ENCODE measurements at regions of chr20 and their contacts with region 1.

Region 1: GRCh38 chr20:60123096-60123495 is 164.9 kb downstream of the CDH26 start:
- DNase-seq: no peak
- H3K4me3 ChIP-seq: no peak overlapping the region
- H3K27ac ChIP-seq: no peak overlapping the region
- H3K4me1 ChIP-seq: peaks cover 3 to 27% (median 11%) of the 10 kb centered on the region in 4 experiments
- H3K27me3 ChIP-seq: no peaks in the 10 kb centered on the region

Region 2: GRCh38 chr20:59770270-59770669 is 352.8 kb before region 1 on chr20:
- CTCF ChIA-PET with region 1: no interaction called
- POLR2A ChIA-PET with region 1: no interaction called
- DNase-seq: no peak
- H3K4me3 ChIP-seq: no peak overlapping the region
- H3K27ac ChIP-seq: no peak overlapping the region
- H3K4me1 ChIP-seq: no peaks in the 10 kb centered on the region
- H3K27me3 ChIP-seq: peaks cover 0 to 11% (median 8%) of the 10 kb centered on the region in 5 experiments

Region 3: GRCh38 chr20:60011512-60012507 is 111.3 kb before region 1 on chr20:
- CTCF ChIA-PET with region 1: no interaction called
- POLR2A ChIA-PET with region 1: no interaction called
- DNase-seq: peak in 2 of 3 donors; percentile 11 to 21
- H3K4me3 ChIP-seq: peak overlapping the region in 1 of 7 experiments; percentile 7
- H3K27ac ChIP-seq: no peak overlapping the region
- H3K4me1 ChIP-seq: peaks cover 0 to 29% (median 7%) of the 10 kb centered on the region in 4 experiments
- H3K27me3 ChIP-seq: no peaks in the 10 kb centered on the region

Region 4: GRCh38 chr20:60137629-60138245 is 14.6 kb after region 1 on chr20:
- CTCF ChIA-PET with region 1: interaction called, 11 read pairs
- POLR2A ChIA-PET with region 1: no interaction called
- DNase-seq: peak; percentile 31 to 70 (median 69)
- H3K4me3 ChIP-seq: peak overlapping the region in 2 of 7 experiments; percentile 24 to 37
- H3K27ac ChIP-seq: no peak overlapping the region
- H3K4me1 ChIP-seq: peaks cover 21 to 44% (median 38%) of the 10 kb centered on the region in 4 experiments
- H3K27me3 ChIP-seq: no peaks in the 10 kb centered on the region

Measured in common myeloid progenitor, CD34-positive (primary cell).